Activated CD4-positive, alpha-beta memory T cell treated with anti-CD3 and anti-CD28 coated beads for 36 hours (primary cell): ENCODE measurements at regions of chr18 and their contacts with region 1.

Region 1: GRCh38 chr18:59823596-59824195 is 76.1 kb upstream of the PMAIP1 start:
- DNase-seq: peak; percentile 69
- H3K4me3 Mint-ChIP-seq: no peak overlapping the region
- H3K27ac Mint-ChIP-seq: no peak overlapping the region
- H3K4me1 Mint-ChIP-seq: no peaks in the 10 kb centered on the region
- H3K27me3 Mint-ChIP-seq: peaks cover 15% of the 10 kb centered on the region

Region 2: DNA sequence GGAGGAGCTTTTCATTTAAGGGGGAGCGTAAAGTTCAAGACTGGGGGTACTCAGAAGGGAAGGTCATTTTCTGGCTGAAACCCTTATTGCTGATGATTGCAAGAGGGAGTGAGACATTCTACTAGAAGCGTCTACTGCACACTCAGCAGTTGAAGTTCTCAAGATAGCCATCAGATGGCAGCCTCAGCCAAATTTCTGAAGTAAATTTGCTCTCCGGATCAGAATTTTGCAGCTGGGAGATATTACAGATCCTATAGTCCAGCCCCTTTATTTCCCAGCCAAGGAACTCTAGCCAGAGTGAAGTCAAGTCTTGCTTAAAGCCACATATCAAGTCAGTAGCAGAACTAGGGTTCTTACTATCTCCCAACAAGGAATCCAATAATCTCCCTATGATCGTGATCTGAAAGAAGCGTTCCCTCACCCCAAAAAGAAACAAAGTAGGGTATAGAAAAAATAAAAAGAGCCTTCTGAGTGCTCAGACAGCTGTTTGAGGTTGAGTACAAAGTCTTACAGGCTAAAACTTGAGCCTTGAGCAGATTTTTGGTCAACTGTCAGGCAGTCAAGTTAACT is 574.4 kb before region 1 on chr18:
- CTCF ChIA-PET with region 1: interaction called, 10 read pairs
- POLR2A ChIA-PET with region 1: no interaction called
- intact Hi-C with region 1: no loop called
- DNase-seq: peak; percentile 54
- H3K4me3 Mint-ChIP-seq: no peak overlapping the region
- H3K27ac Mint-ChIP-seq: no peak overlapping the region
- H3K4me1 Mint-ChIP-seq: no peaks in the 10 kb centered on the region
- H3K27me3 Mint-ChIP-seq: peaks cover 34% of the 10 kb centered on the region

Region 3: GRCh38 chr18:59459369-59460079 is 364.2 kb before region 1 on chr18:
- CTCF ChIA-PET with region 1: interaction called, 68 read pairs
- POLR2A ChIA-PET with region 1: no interaction called
- intact Hi-C with region 1: loop called (anchors 1 kb)
- DNase-seq: no peak
- H3K4me3 Mint-ChIP-seq: no peak overlapping the region
- H3K27ac Mint-ChIP-seq: no peak overlapping the region
- H3K4me1 Mint-ChIP-seq: no peaks in the 10 kb centered on the region
- H3K27me3 Mint-ChIP-seq: peaks cover 5% of the 10 kb centered on the region

Region 4: GRCh38 chr18:59631583-59632181 is 192.0 kb before region 1 on chr18:
- CTCF ChIA-PET with region 1: interaction called, 11 read pairs
- POLR2A ChIA-PET with region 1: no interaction called
- intact Hi-C with region 1: loop called (anchors 1 kb)
- DNase-seq: no peak
- H3K4me3 Mint-ChIP-seq: no peak overlapping the region
- H3K27ac Mint-ChIP-seq: no peak overlapping the region
- H3K4me1 Mint-ChIP-seq: no peaks in the 10 kb centered on the region
- H3K27me3 Mint-ChIP-seq: peaks cover 6% of the 10 kb centered on the region

Region 5: DNA sequence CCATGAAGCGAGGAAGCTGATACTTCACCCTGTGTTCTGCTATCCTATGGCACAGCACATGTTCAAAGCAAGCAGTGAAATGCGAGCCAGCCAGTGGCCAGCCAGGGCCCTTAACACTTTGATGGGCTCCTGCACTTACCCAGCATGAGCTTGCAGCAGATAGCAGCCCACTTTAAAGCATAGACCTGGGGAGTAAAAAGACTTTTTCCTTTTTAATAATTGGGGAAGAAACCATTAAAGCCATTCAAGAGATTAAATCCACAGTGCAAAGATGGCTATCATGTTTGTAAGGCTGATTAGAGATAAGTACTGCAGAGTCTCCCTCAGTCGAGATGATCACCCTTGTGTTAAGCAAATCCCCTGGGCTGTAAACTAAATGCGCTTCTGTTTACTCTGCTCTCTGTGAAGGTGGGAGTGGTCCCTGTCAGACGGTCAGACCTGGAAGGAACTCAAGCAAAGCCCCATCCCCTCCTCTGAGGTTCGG is 142.1 kb before region 1 on chr18:
- CTCF ChIA-PET with region 1: no interaction called
- POLR2A ChIA-PET with region 1: no interaction called
- intact Hi-C with region 1: no loop called
- DNase-seq: no peak
- H3K4me3 Mint-ChIP-seq: no peak overlapping the region
- H3K27ac Mint-ChIP-seq: no peak overlapping the region
- H3K4me1 Mint-ChIP-seq: no peaks in the 10 kb centered on the region
- H3K27me3 Mint-ChIP-seq: peaks cover 4% of the 10 kb centered on the region

Region 6: DNA sequence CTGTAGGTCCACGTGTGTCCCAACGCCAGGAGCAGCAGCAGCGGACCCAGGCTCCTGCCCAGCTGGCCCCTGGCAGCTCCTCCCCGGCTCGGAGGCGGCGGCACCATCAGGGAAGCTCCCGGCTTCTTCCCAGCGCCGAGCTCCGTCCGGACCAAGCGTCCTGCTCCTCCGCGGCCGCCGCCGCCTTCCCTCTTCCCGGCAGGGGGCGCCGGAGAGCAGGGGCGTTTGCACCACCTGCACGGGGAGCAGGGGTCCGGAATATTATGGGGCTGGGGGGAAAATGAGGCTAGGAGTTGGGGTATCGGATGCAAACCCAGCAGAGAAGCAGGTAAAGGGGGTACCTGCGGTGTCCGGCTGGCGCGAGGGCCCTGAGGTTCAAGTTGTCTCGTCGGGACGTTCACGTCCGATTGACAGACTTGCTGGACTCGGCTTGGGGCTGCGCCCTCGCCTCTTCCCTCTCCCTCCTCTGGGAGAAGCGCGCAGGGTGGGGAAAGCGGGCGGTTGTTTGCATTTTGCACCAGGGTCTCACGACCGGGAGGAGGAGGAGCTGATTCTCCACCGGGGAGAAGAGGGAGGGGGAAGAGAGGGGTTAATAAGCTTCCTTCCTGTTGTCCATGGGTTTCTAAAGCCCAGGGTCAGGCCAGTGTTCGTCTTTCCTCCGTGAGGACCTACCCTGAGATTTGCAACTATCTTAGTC is 126.3 kb before region 1 on chr18 and contains the start of gene CCBE1:
- CTCF ChIA-PET with region 1: interaction called, 21 read pairs
- POLR2A ChIA-PET with region 1: no interaction called
- intact Hi-C with region 1: loop called (anchors 2 kb)
- DNase-seq: peak; percentile 61
- H3K4me3 Mint-ChIP-seq: no peak within 1 kb of the TSS
- H3K27ac Mint-ChIP-seq: no peak within 1 kb of the TSS
- H3K4me1 Mint-ChIP-seq: peaks cover 9% of the 10 kb centered on the region
- H3K27me3 Mint-ChIP-seq: peaks cover 42% of the 10 kb centered on the region
- total RNA-seq, gene CCBE1: 0.36 TPM in 1 of 2 experiments, not detected in the other

Region 7: DNA sequence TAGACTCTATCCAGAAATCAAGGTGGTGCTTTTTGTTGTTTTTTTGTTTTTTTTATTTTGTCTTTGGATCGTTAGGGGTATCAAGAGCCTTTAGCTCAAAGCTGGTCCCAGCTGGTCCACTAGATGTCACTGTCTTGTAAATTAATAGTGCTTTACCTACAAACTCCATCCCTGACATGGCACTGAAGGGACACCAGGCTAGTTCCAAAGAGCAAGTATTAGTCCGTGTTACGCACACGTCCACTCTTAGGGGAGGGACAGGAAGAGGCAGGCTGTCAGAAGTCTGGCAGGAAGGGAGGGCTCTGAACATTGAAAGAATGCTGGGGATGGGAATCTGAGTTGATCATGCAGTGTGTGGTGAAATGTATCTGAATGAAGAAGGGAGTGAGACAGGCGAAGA is 40.6 kb before region 1 on chr18:
- CTCF ChIA-PET with region 1: interaction called, 21 read pairs
- POLR2A ChIA-PET with region 1: no interaction called
- intact Hi-C with region 1: loop called (anchors 1 kb)
- DNase-seq: peak; percentile 25
- H3K4me3 Mint-ChIP-seq: no peak overlapping the region
- H3K27ac Mint-ChIP-seq: no peak overlapping the region
- H3K4me1 Mint-ChIP-seq: no peaks in the 10 kb centered on the region
- H3K27me3 Mint-ChIP-seq: peaks cover 5% of the 10 kb centered on the region